CD8-positive, alpha-beta T cell (primary cell): ENCODE measurements at regions of chr19 and their contacts with region 1.

Region 1: DNA sequence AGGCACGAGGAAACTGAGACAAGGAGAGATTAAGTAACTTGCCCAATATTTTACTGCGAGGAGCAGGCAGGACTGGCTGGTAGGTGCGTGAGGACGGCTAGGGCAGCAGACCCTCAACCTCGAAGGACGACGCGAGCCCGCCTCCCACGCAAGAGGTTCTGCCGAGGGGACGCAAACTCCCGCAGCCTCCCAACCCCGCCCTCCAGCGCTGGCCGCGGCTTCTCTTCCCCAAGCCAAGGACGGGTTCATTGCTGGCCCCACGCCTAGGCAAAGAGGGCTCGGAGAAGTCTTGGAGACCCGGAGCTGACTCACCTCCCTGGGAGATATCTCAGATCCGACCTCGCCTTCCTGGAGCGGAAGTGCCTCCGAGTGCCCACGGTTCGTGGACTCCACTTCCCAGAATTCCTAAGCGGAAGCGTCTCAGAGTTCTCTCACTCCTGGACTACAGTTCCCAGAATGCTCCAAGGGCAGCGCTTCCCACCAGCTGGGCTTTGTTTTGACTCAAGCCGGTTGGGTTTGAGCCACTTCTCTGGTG is at the start of gene ZNF235:
- DNase-seq: peak; percentile 22 to 89 (median 70)
- ATAC-seq: peak; percentile 96
- H3K4me3 ChIP-seq: peak within 1 kb of the TSS; percentile 75 to 77
- H3K4me3 Mint-ChIP-seq: peak within 1 kb of the TSS; percentile 94
- H3K27ac ChIP-seq: peak within 1 kb of the TSS; percentile 26 to 52
- H3K27ac Mint-ChIP-seq: peak within 1 kb of the TSS; percentile 85
- H3K4me1 ChIP-seq: peaks cover 15% of the 10 kb centered on the region
- H3K4me1 Mint-ChIP-seq: peaks cover 35% of the 10 kb centered on the region
- H3K27me3 ChIP-seq: no peaks in the 10 kb centered on the region
- H3K27me3 Mint-ChIP-seq: peaks cover 7% of the 10 kb centered on the region
- CTCF ChIP-seq: no peak
- total RNA-seq, gene ZNF235: 2.6 to 3.7 TPM

Region 2: GRCh38 chr19:43983912-43984686 is 320.6 kb before region 1 on chr19 and contains the start of gene ZNF155:
- CTCF ChIA-PET with region 1: no interaction called
- POLR2A ChIA-PET with region 1: no interaction called
- intact Hi-C with region 1: no loop called
- DNase-seq: peak; percentile 28 to 89 (median 64)
- ATAC-seq: peak; percentile 86
- H3K4me3 ChIP-seq: peak within 1 kb of the TSS; percentile 76 to 92
- H3K4me3 Mint-ChIP-seq: peak within 1 kb of the TSS; percentile 96
- H3K27ac ChIP-seq: peak within 1 kb of the TSS; percentile 61 to 65
- H3K27ac Mint-ChIP-seq: peak within 1 kb of the TSS; percentile 92
- H3K4me1 ChIP-seq: no peaks in the 10 kb centered on the region
- H3K4me1 Mint-ChIP-seq: peaks cover 15% of the 10 kb centered on the region
- H3K27me3 ChIP-seq: no peaks in the 10 kb centered on the region
- H3K27me3 Mint-ChIP-seq: no peaks in the 10 kb centered on the region
- CTCF ChIP-seq: no peak
- total RNA-seq, gene ZNF155: 3.4 to 3.5 TPM

Region 3: DNA sequence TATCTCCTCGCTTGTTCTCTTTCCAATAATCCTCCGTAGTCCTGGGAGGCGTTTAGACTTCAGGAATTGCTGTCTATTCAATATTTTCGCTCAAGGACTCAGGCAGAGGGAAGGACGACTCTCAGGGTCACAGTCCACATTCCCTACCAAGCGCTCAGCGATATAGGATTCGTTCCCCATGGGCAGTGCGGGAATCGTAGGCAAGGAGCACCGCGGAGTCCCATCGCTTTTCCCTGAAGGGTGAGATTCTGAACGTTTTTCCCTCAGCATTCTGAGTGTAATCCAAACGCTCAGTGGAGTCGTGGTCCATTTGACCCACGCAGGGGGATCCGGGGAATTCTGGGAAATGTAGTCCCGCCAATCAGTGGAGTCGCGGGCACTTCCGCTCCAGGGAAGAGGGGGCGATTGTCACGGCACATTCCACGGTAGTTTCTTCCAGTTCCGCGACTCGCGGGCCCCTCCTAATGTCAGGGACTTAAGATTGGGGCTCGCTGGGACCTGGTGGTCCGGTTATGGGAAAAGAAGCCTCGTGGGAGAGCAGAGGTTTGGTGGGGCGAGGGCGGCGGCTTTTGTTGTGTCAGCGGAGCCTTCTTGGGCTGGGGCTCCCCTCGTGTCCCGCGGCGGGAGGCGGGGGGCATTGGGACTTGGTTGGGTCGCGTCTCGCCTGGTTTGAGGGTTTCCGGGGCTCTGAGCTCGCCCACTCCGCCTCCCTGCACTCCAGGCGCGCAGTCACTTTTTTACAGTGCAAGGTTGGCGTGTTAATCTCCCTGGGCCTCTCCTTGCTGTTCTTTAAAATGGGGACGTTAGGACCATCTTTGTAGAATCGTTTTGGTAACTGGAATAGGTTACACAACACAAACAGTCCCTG is 163.3 kb before region 1 on chr19 and contains the start of gene ZNF234:
- CTCF ChIA-PET with region 1: no interaction called
- POLR2A ChIA-PET with region 1: no interaction called
- intact Hi-C with region 1: loop called in 1 of 2 experiments (anchors 1 kb)
- DNase-seq: peak; percentile 22 to 86 (median 68)
- ATAC-seq: peak; percentile 93
- H3K4me3 ChIP-seq: peak within 1 kb of the TSS; percentile 77 to 82
- H3K4me3 Mint-ChIP-seq: peak within 1 kb of the TSS; percentile 96
- H3K27ac ChIP-seq: peak within 1 kb of the TSS; percentile 34 to 76
- H3K27ac Mint-ChIP-seq: peak within 1 kb of the TSS; percentile 85
- H3K4me1 ChIP-seq: peaks cover 17% of the 10 kb centered on the region
- H3K4me1 Mint-ChIP-seq: peaks cover 25% of the 10 kb centered on the region
- H3K27me3 ChIP-seq: no peaks in the 10 kb centered on the region
- H3K27me3 Mint-ChIP-seq: no peaks in the 10 kb centered on the region
- CTCF ChIP-seq: no peak
- total RNA-seq, gene ZNF234: 2.2 to 2.4 TPM

Region 4: DNA sequence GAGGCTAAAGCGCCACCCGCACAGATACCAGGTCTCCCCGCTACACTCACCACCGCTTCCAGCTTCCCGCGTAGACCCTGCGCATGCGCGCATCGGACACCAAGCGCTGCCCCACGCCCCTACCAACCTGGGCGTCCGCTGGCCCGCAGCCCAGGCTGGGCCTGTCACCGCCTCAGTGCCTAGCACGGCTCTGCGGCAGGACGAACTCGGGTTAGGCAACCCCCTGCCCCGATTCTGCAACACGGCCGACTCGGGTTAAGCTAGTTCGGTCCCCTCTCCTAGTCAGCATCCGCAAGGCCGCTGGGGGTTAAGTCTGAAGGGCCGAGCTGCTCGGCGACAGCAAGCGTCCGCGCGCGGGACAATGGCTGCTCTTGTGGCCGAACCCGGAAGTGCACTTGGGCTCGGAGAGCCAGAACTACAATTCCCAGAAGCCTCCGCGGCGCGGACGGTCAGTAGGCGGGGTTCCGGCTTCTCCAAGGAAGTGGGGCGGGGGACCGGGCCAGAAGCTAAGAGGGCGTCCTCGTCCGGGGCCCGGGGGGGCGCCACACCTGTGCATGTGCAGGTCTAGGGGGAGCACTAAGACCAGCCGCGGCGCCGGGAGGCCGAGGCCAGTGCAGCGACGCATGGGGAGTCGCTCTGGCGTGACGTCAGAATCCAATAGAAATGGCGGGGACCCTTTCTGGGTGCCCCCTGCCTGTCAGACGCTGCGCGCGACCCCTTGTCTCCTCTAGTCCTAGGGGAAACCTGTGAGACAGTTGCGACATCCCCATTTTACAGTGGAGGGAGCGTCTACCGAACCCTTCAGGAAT is 195.6 kb after region 1 on chr19 and contains the start of gene ZNF180:
- CTCF ChIA-PET with region 1: no interaction called
- POLR2A ChIA-PET with region 1: no interaction called
- intact Hi-C with region 1: loop called in 1 of 2 experiments (anchors 1 kb)
- DNase-seq: peak; percentile 89 to 98 (median 96)
- ATAC-seq: peak; percentile 96
- H3K4me3 ChIP-seq: peak within 1 kb of the TSS; percentile 86 to 90
- H3K4me3 Mint-ChIP-seq: peak within 1 kb of the TSS; percentile 92
- H3K27ac ChIP-seq: peak within 1 kb of the TSS; percentile 60 to 77
- H3K27ac Mint-ChIP-seq: peak within 1 kb of the TSS; percentile 92
- H3K4me1 ChIP-seq: peaks cover 21% of the 10 kb centered on the region
- H3K4me1 Mint-ChIP-seq: peaks cover 34% of the 10 kb centered on the region
- H3K27me3 ChIP-seq: no peaks in the 10 kb centered on the region
- H3K27me3 Mint-ChIP-seq: peaks cover 10% of the 10 kb centered on the region
- CTCF ChIP-seq: peak; percentile 35
- total RNA-seq, gene ZNF180: 8.5 to 8.8 TPM